Activated T-helper 2 cell treated with anti-CD3 and anti-CD28 coated beads, Interferon-gamma antibody, Interleukin-2, Interleukin-4, amounts not matched to agents 10 μg/mL and 5 μg/mL and 100 μg/mL, durations not matched to agents 14 hours and 24 hours and 36 hours (primary cell): ENCODE measurements at regions of chr2 and their contacts with region 1.

Region 1: GRCh38 chr2:143802871-143803650 is 673.8 kb downstream of the ARHGAP15 start:
- DNase-seq: no peak
- H3K4me3 Mint-ChIP-seq: no peak overlapping the region
- H3K27ac Mint-ChIP-seq: no peak overlapping the region
- H3K4me1 Mint-ChIP-seq: peaks cover 8% of the 10 kb centered on the region
- H3K27me3 Mint-ChIP-seq: peaks cover 6% of the 10 kb centered on the region

Region 2: GRCh38 chr2:143730155-143730952 is 72.7 kb before region 1 on chr2:
- intact Hi-C with region 1: loop called (anchors 2 kb)
- DNase-seq: no peak
- H3K4me3 Mint-ChIP-seq: peak overlapping the region; percentile 9
- H3K27ac Mint-ChIP-seq: peak overlapping the region; percentile 67
- H3K4me1 Mint-ChIP-seq: peaks cover 24% of the 10 kb centered on the region
- H3K27me3 Mint-ChIP-seq: no peaks in the 10 kb centered on the region